ENCODE measurements at regions of chr6 and their contacts with region 1.

Region 1: GRCh38 chr6:137094411-137095008 is 49.7 kb upstream of the IL20RA start:
- DNase-seq: peak; percentile 91
- ATAC-seq: peak; percentile 58
- H3K4me3 ChIP-seq: 0 out of 2 replicates have a peak overlapping the region, but pooled peaks have one; percentile 0
- H3K27ac ChIP-seq: peak overlapping the region; percentile 95
- H3K4me1 ChIP-seq: peaks cover 55% of the 10 kb centered on the region
- H3K27me3 ChIP-seq: no peaks in the 10 kb centered on the region
- CTCF ChIP-seq: peak; percentile 70 to 87 (median 76)
- EP300 ChIP-seq: peak in 1 of 2 experiments; percentile 32; a peak in 1 of 4 replicates
- POLR2A ChIP-seq: no peak
- RAD21 ChIP-seq: peak; percentile 93

Region 2: DNA sequence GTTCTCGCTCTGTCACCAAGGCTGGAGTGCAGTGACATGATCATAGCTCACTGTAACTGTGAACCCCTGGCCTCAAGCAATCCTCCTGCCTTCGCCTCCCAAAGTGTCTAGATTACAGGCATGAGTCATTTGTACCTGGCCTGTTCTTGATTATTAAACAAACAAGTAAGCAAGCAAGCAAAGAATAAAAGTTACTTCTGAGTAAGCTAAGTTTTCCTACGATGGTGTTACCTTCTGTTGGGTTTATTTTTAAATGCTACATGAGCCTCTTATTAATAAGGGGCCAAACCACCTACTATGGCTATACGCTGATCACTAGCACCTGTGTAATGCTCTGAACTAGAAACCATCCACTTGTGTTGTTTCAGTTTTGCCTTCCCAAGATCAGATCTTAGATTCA is 28.1 kb after region 1 on chr6:
- CTCF ChIA-PET with region 1: interaction called, 30 read pairs
- POLR2A ChIA-PET with region 1: interaction called, 4 read pairs
- RAD21 ChIA-PET with region 1: interaction called, 13 read pairs
- SMC1A ChIA-PET with region 1: interaction called, 47 read pairs
- in situ Hi-C with region 1: no loop called
- intact Hi-C with region 1: no loop called
- DNase-seq: no peak
- ATAC-seq: peak; percentile 74
- H3K4me3 ChIP-seq: no peak overlapping the region
- H3K27ac ChIP-seq: peak overlapping the region; percentile 91
- H3K4me1 ChIP-seq: peaks cover 35% of the 10 kb centered on the region
- H3K27me3 ChIP-seq: no peaks in the 10 kb centered on the region
- CTCF ChIP-seq: no peak
- EP300 ChIP-seq: no peak
- POLR2A ChIP-seq: no peak
- RAD21 ChIP-seq: peak; percentile 12; the same call in 1 of the 2 replicates

Region 3: DNA sequence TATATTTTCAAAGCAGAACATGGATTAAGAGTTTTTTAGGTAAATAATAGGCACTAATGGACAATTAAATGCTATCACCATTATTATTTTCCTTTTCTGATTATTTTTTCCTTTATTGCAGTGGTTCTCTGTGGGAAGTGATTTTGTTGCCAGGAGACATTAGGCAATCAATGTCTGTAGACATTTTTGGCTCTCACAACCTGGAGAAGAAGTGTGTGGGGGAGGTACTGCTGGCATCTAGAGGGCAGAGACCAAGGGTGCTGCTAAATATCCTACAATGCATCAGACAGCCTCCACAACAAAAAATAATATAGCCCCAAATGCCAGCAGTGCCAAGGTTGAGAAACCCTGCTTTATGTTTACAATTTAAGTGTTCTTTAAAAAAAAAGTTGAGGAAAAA is 116.4 kb after region 1 on chr6:
- CTCF ChIA-PET with region 1: interaction called, 10 read pairs
- POLR2A ChIA-PET with region 1: interaction called, 8 read pairs
- RAD21 ChIA-PET with region 1: interaction called, 54 read pairs
- SMC1A ChIA-PET with region 1: interaction called, 89 read pairs
- in situ Hi-C with region 1: no loop called
- intact Hi-C with region 1: no loop called
- DNase-seq: no peak
- ATAC-seq: no peak
- H3K4me3 ChIP-seq: no peak overlapping the region
- H3K27ac ChIP-seq: no peak overlapping the region
- H3K4me1 ChIP-seq: peaks cover 9% of the 10 kb centered on the region; the same call in 1 of the 2 replicates
- H3K27me3 ChIP-seq: no peaks in the 10 kb centered on the region
- CTCF ChIP-seq: no peak
- EP300 ChIP-seq: no peak
- POLR2A ChIP-seq: no peak
- RAD21 ChIP-seq: no peak

Region 4: GRCh38 chr6:137248702-137249101 is 154.2 kb after region 1 on chr6:
- CTCF ChIA-PET with region 1: interaction called, 5 read pairs
- POLR2A ChIA-PET with region 1: no interaction called
- RAD21 ChIA-PET with region 1: interaction called, 23 read pairs
- SMC1A ChIA-PET with region 1: interaction called, 10 read pairs
- in situ Hi-C with region 1: no loop called
- intact Hi-C with region 1: no loop called
- DNase-seq: no peak
- ATAC-seq: peak; percentile 84
- H3K4me3 ChIP-seq: no peak overlapping the region
- H3K27ac ChIP-seq: peak overlapping the region; percentile 37; the same call in 1 of the 2 replicates
- H3K4me1 ChIP-seq: peaks cover 11% of the 10 kb centered on the region
- H3K27me3 ChIP-seq: no peaks in the 10 kb centered on the region
- CTCF ChIP-seq: no peak
- EP300 ChIP-seq: no peak
- POLR2A ChIP-seq: no peak
- RAD21 ChIP-seq: no peak

Region 5: GRCh38 chr6:137313928-137314855 is 219.7 kb after region 1 on chr6:
- CTCF ChIA-PET with region 1: interaction called, 72 read pairs
- POLR2A ChIA-PET with region 1: interaction called, 5 read pairs
- RAD21 ChIA-PET with region 1: interaction called, 69 read pairs
- SMC1A ChIA-PET with region 1: interaction called, 80 read pairs
- in situ Hi-C with region 1: loop called (anchors 5 kb)
- intact Hi-C with region 1: loop called (anchors 1 kb)
- DNase-seq: peak; percentile 43
- ATAC-seq: peak; percentile 97
- H3K4me3 ChIP-seq: no peak overlapping the region
- H3K27ac ChIP-seq: no peak overlapping the region
- H3K4me1 ChIP-seq: peaks cover 10% of the 10 kb centered on the region
- H3K27me3 ChIP-seq: no peaks in the 10 kb centered on the region
- CTCF ChIP-seq: peak; percentile 66 to 90 (median 79)
- EP300 ChIP-seq: no peak
- POLR2A ChIP-seq: no peak
- RAD21 ChIP-seq: peak; percentile 99

Region 6: GRCh38 chr6:137351890-137352289 is 257.4 kb after region 1 on chr6:
- CTCF ChIA-PET with region 1: no interaction called
- POLR2A ChIA-PET with region 1: no interaction called
- RAD21 ChIA-PET with region 1: no interaction called
- SMC1A ChIA-PET with region 1: no interaction called
- in situ Hi-C with region 1: no loop called
- intact Hi-C with region 1: no loop called
- DNase-seq: no peak
- ATAC-seq: no peak
- H3K4me3 ChIP-seq: no peak overlapping the region
- H3K27ac ChIP-seq: no peak overlapping the region
- H3K4me1 ChIP-seq: no peaks in the 10 kb centered on the region
- H3K27me3 ChIP-seq: no peaks in the 10 kb centered on the region
- CTCF ChIP-seq: no peak
- EP300 ChIP-seq: no peak
- POLR2A ChIP-seq: no peak
- RAD21 ChIP-seq: no peak

Region 7: GRCh38 chr6:137641474-137642077 is 547.1 kb after region 1 on chr6:
- CTCF ChIA-PET with region 1: interaction called, 10 read pairs
- POLR2A ChIA-PET with region 1: no interaction called
- RAD21 ChIA-PET with region 1: interaction called, 15 read pairs
- SMC1A ChIA-PET with region 1: interaction called, 20 read pairs
- in situ Hi-C with region 1: loop called (anchors 5 kb)
- intact Hi-C with region 1: loop called (anchors 2 kb)
- DNase-seq: no peak
- ATAC-seq: peak; percentile 79
- H3K4me3 ChIP-seq: no peak overlapping the region
- H3K27ac ChIP-seq: no peak overlapping the region
- H3K4me1 ChIP-seq: peaks cover 21% of the 10 kb centered on the region
- H3K27me3 ChIP-seq: no peaks in the 10 kb centered on the region
- CTCF ChIP-seq: peak; percentile 53 to 83 (median 65)
- EP300 ChIP-seq: no peak
- POLR2A ChIP-seq: no peak
- RAD21 ChIP-seq: peak; percentile 91